ENCODE measurements at regions of chr22 and their contacts with region 1.

Region 1: DNA sequence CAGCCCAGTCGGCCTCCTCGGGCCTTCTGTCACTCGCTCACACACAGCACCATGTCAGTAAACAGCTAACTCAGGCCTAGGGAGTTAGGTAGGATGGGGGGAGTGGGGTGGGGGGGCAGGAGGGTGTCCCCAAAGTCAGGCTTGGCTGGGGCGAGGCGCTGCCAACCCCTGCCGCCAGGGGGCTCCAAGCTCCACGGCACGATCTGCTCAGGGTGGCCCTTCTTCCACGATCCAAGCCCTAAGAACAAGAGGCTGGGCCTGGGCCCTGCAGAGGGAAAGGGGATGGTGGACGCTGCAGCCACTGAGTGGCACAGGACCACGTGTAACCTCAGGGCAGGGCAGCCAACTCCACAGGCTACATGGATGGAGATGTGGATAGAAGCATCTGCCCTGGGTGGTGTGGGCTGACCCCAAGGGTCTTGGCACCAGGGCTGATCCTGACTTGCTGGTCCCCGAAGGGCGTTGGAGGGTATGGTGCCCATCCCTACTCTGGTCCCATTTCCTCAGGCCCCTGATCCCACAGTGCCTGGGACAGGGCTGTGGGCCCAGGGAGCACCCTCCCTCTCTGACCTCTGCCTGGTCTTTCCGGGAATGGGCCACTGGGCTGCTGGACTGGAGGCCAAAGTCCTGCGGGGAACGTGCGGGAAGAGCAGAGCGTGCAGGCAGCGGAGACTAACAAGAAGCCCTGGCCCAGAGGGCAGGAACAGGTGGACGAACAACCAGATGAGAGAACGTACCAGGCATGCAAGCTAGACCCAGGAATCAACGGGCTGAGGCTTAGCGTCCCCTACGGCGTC is 29.1 kb upstream of the TXNRD2 start:
- DNase-seq: peak; percentile 68
- H3K4me3 ChIP-seq: no peak overlapping the region
- H3K27ac ChIP-seq: no peak overlapping the region
- H3K4me1 ChIP-seq: peaks cover 18% of the 10 kb centered on the region
- CTCF ChIP-seq: peak; percentile 85

Region 2: DNA sequence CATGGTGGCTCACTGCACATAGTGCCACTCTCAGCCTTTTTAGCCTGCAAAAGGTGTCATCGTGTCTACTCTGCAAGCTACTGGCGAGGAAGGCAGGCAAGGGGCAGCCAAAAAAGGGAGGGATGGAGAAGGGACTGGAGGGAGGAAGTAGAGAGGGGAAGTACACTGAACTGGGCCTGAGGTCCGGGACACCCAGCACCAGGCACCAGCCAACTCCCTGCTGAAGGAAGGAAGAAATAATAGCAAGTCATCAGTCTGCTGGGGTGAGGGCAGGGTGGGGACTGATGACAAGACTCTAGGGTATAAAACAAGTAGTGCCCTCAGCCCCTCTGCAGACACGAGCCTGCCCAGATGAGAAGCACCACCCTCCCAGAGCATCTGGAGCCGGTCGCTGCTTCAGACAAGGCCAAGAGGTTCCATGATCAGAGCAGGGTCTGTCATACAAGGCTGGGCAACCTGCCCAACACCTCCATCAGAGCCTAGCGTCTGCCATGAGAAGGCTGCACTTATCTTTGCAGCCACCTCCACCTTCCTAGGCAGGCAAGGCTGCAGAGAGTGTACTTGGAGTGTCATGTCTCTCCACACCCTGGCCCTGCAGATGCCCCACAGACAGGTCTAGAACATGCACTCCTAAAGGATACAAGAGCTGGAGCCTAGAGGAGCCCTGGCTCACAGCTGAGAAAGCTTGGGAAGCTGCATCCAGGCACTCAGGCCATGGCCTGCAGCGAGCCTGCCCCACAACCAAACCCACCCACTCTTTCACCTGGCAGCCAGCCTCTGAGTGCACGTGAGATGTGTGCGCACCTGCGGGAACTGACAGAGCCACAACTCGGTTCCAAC is 38.1 kb before region 1 on chr22:
- CTCF ChIA-PET with region 1: no interaction called
- POLR2A ChIA-PET with region 1: no interaction called
- intact Hi-C with region 1: no loop called
- DNase-seq: no peak
- H3K4me3 ChIP-seq: no peak overlapping the region
- H3K27ac ChIP-seq: no peak overlapping the region
- H3K4me1 ChIP-seq: no peaks in the 10 kb centered on the region
- CTCF ChIP-seq: no peak

Region 3: GRCh38 chr22:20013382-20013871 is 42.8 kb after region 1 on chr22:
- CTCF ChIA-PET with region 1: no interaction called
- POLR2A ChIA-PET with region 1: no interaction called
- intact Hi-C with region 1: loop called (anchors 1 kb)
- DNase-seq: peak; percentile 36
- H3K4me3 ChIP-seq: no peak overlapping the region
- H3K27ac ChIP-seq: no peak overlapping the region
- H3K4me1 ChIP-seq: peaks cover 12% of the 10 kb centered on the region
- CTCF ChIP-seq: peak; percentile 62

Region 4: GRCh38 chr22:20027966-20028854 is 57.5 kb after region 1 on chr22:
- CTCF ChIA-PET with region 1: no interaction called
- POLR2A ChIA-PET with region 1: no interaction called
- intact Hi-C with region 1: loop called (anchors 1 kb)
- DNase-seq: peak; percentile 52
- H3K4me3 ChIP-seq: no peak overlapping the region
- H3K27ac ChIP-seq: no peak overlapping the region
- H3K4me1 ChIP-seq: peaks cover 22% of the 10 kb centered on the region
- CTCF ChIP-seq: peak; percentile 67

Region 5: GRCh38 chr22:20111045-20111688 is 140.5 kb after region 1 on chr22:
- CTCF ChIA-PET with region 1: no interaction called
- POLR2A ChIA-PET with region 1: no interaction called
- intact Hi-C with region 1: loop called (anchors 1 kb)
- DNase-seq: peak; percentile 67
- H3K4me3 ChIP-seq: no peak overlapping the region
- H3K27ac ChIP-seq: peak overlapping the region; percentile 84
- H3K4me1 ChIP-seq: peaks cover 32% of the 10 kb centered on the region
- CTCF ChIP-seq: peak; percentile 79

Region 6: DNA sequence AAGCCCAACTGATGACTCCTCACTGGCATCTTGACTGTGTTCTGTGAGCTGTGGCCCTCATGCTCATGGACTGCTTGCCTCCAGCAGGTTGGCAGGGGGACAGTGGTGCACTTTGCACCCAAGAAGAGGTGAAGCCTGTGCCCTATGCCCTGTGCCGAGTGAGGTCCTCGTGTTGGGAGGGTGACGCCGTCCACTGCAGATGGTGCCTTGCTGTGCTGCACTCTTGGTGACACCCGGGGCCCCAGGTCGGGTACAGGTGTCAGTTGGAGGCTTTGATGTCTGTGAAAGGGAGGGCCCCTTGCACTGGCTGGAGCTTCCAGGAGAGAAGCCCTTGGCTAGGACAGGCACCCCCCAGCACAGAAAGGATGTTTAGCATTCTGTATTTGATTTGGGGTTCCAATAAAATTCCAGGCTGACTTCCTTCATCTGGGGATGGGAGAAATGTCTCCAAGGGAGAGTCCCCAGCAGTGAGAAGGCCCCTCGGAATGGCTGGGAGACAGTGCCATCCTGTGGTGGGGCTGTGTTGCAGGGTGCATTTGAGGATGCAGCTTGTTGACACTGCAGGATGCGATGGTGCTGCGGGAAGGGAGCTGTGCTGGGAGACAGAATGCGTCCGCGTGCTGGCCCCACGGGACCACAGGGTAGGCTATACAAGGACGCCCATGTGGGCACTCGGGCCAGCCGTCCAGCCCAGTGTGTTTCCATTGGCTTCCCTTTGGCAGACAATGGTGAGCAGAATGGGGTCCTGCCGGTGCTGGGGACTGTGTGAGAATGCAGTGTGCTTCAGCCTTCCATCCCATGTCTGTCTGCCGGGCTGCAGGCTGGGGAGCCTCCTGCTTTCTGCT is 158.4 kb after region 1 on chr22:
- CTCF ChIA-PET with region 1: no interaction called
- POLR2A ChIA-PET with region 1: no interaction called
- intact Hi-C with region 1: loop called (anchors 1 kb)
- DNase-seq: peak; percentile 63
- H3K4me3 ChIP-seq: no peak overlapping the region
- H3K27ac ChIP-seq: peak overlapping the region; percentile 4
- H3K4me1 ChIP-seq: peaks cover 11% of the 10 kb centered on the region
- CTCF ChIP-seq: peak; percentile 80